Ovary (tissue), 10 donors: ENCODE measurements at regions of chr19 and their contacts with region 1.

Region 1: GRCh38 chr19:8505680-8506401 is 3.4 kb upstream of the PRAM1 start:
- DNase-seq: peak; percentile 76 to 90 (median 86)
- H3K4me3 ChIP-seq: peak overlapping the region; percentile 45
- H3K27ac ChIP-seq: peak overlapping the region in 1 of 2 donors; percentile 46
- H3K4me1 ChIP-seq: peaks cover 2% of the 10 kb centered on the region
- H3K27me3 ChIP-seq: no peaks in the 10 kb centered on the region
- CTCF ChIP-seq: peak; percentile 57 to 90 (median 87)
- EP300 ChIP-seq: no peak
- POLR2A ChIP-seq: no peak

Region 2: DNA sequence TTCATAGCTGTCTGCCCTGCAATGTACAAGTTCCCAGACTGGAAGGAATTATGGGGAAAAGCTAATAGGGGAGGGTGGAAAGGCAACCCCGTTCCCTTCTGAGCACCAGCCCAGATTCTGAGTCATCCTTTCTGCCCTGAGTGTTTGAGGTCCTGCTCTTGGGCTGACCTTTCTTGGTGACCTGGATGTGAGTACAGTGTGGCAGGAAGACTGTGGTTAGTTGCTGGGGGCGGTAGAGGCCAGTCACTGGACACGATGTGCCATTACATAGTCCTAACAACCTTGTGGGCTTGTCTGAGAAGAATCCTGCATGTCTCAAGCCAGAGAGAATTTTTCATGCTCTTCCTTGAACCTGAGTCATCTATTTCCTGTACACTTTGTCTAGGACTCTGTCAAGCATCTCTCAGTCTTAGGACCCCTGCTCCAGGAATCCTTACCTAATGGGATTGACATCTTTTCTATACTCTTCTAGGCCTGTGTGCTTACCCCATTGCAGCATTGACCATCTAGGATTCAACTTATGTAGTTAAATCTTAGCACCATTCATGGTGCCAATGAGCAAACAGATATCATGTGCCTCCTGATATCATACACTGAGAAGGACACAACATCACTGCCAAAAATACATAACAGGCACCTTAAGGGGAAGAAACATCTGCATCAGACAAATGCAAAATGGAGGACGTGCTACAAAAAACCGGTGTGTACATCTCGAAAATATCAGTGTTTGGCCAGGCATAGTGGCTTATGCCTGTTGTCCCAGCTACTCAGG is 150.0 kb before region 1 on chr19:
- intact Hi-C with region 1: loop called in 2 of 4 experiments (anchors 5 kb)
- DNase-seq: no peak
- H3K4me3 ChIP-seq: no peak overlapping the region
- H3K27ac ChIP-seq: no peak overlapping the region
- H3K4me1 ChIP-seq: peaks cover 2% of the 10 kb centered on the region
- H3K27me3 ChIP-seq: no peaks in the 10 kb centered on the region
- CTCF ChIP-seq: no peak
- EP300 ChIP-seq: no peak
- POLR2A ChIP-seq: no peak

Region 3: GRCh38 chr19:8404391-8405151 is 101.3 kb before region 1 on chr19:
- intact Hi-C with region 1: loop called in 1 of 4 experiments (anchors 10 kb)
- DNase-seq: peak in 3 of 5 donors; percentile 36 to 63 (median 55)
- H3K4me3 ChIP-seq: no peak overlapping the region
- H3K27ac ChIP-seq: peak overlapping the region in 1 of 2 donors; percentile 38
- H3K4me1 ChIP-seq: peaks cover 7% of the 10 kb centered on the region
- H3K27me3 ChIP-seq: no peaks in the 10 kb centered on the region
- CTCF ChIP-seq: no peak
- EP300 ChIP-seq: no peak
- POLR2A ChIP-seq: no peak

Region 4: GRCh38 chr19:8412783-8413628 is 92.8 kb before region 1 on chr19 and contains the start of gene MARCHF2:
- intact Hi-C with region 1: loop called in 2 of 4 experiments (anchors 5 to 10 kb)
- DNase-seq: peak; percentile 95 to 99 (median 97)
- H3K4me3 ChIP-seq: peak within 1 kb of the TSS; percentile 67
- H3K27ac ChIP-seq: no peak within 1 kb of the TSS
- H3K4me1 ChIP-seq: peaks cover 5% of the 10 kb centered on the region
- H3K27me3 ChIP-seq: no peaks in the 10 kb centered on the region
- CTCF ChIP-seq: peak; percentile 62 to 70 (median 65)
- EP300 ChIP-seq: no peak
- POLR2A ChIP-seq: peak; percentile 41
- total RNA-seq, gene MARCHF2: 20.7 to 62.7 (median 27.2) TPM